ENCODE measurements at regions of chr2 and their contacts with region 1.

Region 1: GRCh38 chr2:177552422-177553175 is 160.0 kb downstream of the AGPS start:
- DNase-seq: peak; percentile 91 to 97
- ATAC-seq: peak; percentile 90 to 95 (median 92)
- H3K4me3 ChIP-seq: peak overlapping the region; percentile 74
- H3K4me3 Mint-ChIP-seq: peak overlapping the region; percentile 98
- H3K27ac ChIP-seq: peak overlapping the region; percentile 96
- H3K27ac Mint-ChIP-seq: peak overlapping the region; percentile 98 to 100
- H3K4me1 ChIP-seq: peaks cover 13% of the 10 kb centered on the region
- H3K4me1 Mint-ChIP-seq: peaks cover 12 to 13% of the 10 kb centered on the region in 2 donors
- H3K27me3 ChIP-seq: no peaks in the 10 kb centered on the region
- H3K27me3 Mint-ChIP-seq: peaks cover 4 to 8% of the 10 kb centered on the region in 2 donors
- CTCF ChIP-seq: no peak

Region 2: GRCh38 chr2:177392373-177393202 is 160.0 kb before region 1 on chr2 and contains the start of gene AGPS:
- intact Hi-C with region 1: no loop called
- DNase-seq: peak; percentile 72 to 84
- ATAC-seq: peak; percentile 95 to 96 (median 96)
- H3K4me3 ChIP-seq: peak within 1 kb of the TSS; percentile 89
- H3K4me3 Mint-ChIP-seq: peak within 1 kb of the TSS; percentile 94
- H3K27ac ChIP-seq: peak within 1 kb of the TSS; percentile 61
- H3K27ac Mint-ChIP-seq: peak within 1 kb of the TSS; percentile 84 to 96
- H3K4me1 ChIP-seq: peaks cover 11% of the 10 kb centered on the region
- H3K4me1 Mint-ChIP-seq: peaks cover 50 to 53% of the 10 kb centered on the region in 2 donors
- H3K27me3 ChIP-seq: no peaks in the 10 kb centered on the region
- H3K27me3 Mint-ChIP-seq: no peaks in the 10 kb centered on the region
- CTCF ChIP-seq: no peak
- total RNA-seq, gene AGPS: 27.4 to 36.0 (median 35.6) TPM

Region 3: GRCh38 chr2:177585234-177585863 is 32.8 kb after region 1 on chr2:
- intact Hi-C with region 1: no loop called
- DNase-seq: no peak
- ATAC-seq: no peak
- H3K4me3 ChIP-seq: no peak overlapping the region
- H3K4me3 Mint-ChIP-seq: no peak overlapping the region
- H3K27ac ChIP-seq: no peak overlapping the region
- H3K27ac Mint-ChIP-seq: no peak overlapping the region
- H3K4me1 ChIP-seq: no peaks in the 10 kb centered on the region
- H3K4me1 Mint-ChIP-seq: no peaks in the 10 kb centered on the region
- H3K27me3 ChIP-seq: no peaks in the 10 kb centered on the region
- H3K27me3 Mint-ChIP-seq: peaks cover 0 to 19% of the 10 kb centered on the region in 2 donors
- CTCF ChIP-seq: no peak

Region 4: GRCh38 chr2:177618255-177619253 is 66.0 kb after region 1 on chr2:
- intact Hi-C with region 1: loop called (anchors 1 kb)
- DNase-seq: peak; percentile 91 to 96
- ATAC-seq: peak; percentile 90 to 94 (median 92)
- H3K4me3 ChIP-seq: peak overlapping the region; percentile 95
- H3K4me3 Mint-ChIP-seq: peak overlapping the region; percentile 95
- H3K27ac ChIP-seq: peak overlapping the region; percentile 99
- H3K27ac Mint-ChIP-seq: peak overlapping the region; percentile 98 to 99
- H3K4me1 ChIP-seq: peaks cover 11% of the 10 kb centered on the region
- H3K4me1 Mint-ChIP-seq: peaks cover 12% of the 10 kb centered on the region in 2 donors
- H3K27me3 ChIP-seq: peaks cover 6% of the 10 kb centered on the region
- H3K27me3 Mint-ChIP-seq: peaks cover 14 to 15% of the 10 kb centered on the region in 2 donors
- CTCF ChIP-seq: no peak

Measured in natural killer cell (primary cell).